Activated CD4-positive, alpha-beta T cell treated with anti-CD3 and anti-CD28 coated beads, Interleukin-2, amount 10 ng/mL, durations not matched to agents 24 days and 14 days (primary cell): ENCODE measurements at regions of chr4 and their contacts with region 1.

Region 1: GRCh38 chr4:38132107-38132673 is 172.0 kb downstream of the PTTG2 start:
- DNase-seq: peak; percentile 93
- H3K4me3 Mint-ChIP-seq: peak overlapping the region; percentile 76
- H3K27ac Mint-ChIP-seq: peak overlapping the region; percentile 87
- H3K4me1 Mint-ChIP-seq: peaks cover 52% of the 10 kb centered on the region
- H3K27me3 Mint-ChIP-seq: peaks cover 2% of the 10 kb centered on the region

Region 2: GRCh38 chr4:37826295-37827029 is 305.7 kb before region 1 on chr4 and contains the start of gene PGM2:
- intact Hi-C with region 1: loop called (anchors 1 kb)
- DNase-seq: peak; percentile 98
- H3K4me3 Mint-ChIP-seq: peak within 1 kb of the TSS; percentile 95
- H3K27ac Mint-ChIP-seq: peak within 1 kb of the TSS; percentile 91
- H3K4me1 Mint-ChIP-seq: peaks cover 32% of the 10 kb centered on the region
- H3K27me3 Mint-ChIP-seq: peaks cover 1% of the 10 kb centered on the region
- total RNA-seq, gene PGM2: 53.4 and 55.1 TPM in 2 replicates

Region 3: GRCh38 chr4:38023347-38024205 is 108.6 kb before region 1 on chr4:
- intact Hi-C with region 1: no loop called
- DNase-seq: no peak
- H3K4me3 Mint-ChIP-seq: no peak overlapping the region
- H3K27ac Mint-ChIP-seq: no peak overlapping the region
- H3K4me1 Mint-ChIP-seq: peaks cover 3% of the 10 kb centered on the region
- H3K27me3 Mint-ChIP-seq: no peaks in the 10 kb centered on the region

Region 4: DNA sequence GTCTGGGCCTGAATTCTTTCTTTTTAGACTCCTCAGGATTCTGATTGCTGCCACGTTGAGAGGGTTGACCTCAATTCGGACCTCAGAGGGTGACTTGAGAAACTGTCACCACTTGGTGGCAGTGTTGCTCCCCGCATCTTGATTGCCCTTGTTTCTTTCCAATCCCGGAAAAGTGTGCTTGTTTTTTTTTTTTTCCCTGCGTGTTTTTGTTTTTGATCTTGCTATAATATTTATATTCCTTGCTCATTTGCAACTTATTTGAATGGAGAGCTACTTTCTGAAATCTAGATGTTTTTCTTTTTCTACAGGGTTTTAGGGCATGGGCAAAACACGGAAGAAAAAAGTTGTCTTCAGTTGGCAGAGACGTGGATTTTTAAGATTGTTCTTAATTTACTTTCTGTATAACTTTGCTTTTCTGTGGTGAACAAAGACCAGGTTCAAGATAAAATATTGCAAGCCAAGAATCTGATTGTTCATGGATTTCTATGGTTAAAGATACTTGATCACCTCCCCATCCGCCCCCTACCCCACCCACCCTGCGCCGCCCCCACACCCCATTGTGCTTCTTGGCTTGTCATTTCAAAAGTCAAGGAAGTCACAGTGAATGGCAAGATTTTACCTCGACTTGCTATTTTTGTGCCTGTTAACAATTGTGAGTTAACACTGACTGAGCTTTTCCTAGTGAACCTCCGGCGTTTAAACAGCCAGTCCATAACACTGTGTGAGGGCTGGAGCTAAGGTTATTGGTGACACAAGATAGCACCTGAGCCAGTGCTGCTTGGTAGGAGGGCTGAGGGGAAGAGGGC is 69.9 kb before region 1 on chr4:
- intact Hi-C with region 1: loop called (anchors 1 kb)
- DNase-seq: peak; percentile 88
- H3K4me3 Mint-ChIP-seq: peak overlapping the region; percentile 88
- H3K27ac Mint-ChIP-seq: peak overlapping the region; percentile 69
- H3K4me1 Mint-ChIP-seq: peaks cover 12% of the 10 kb centered on the region
- H3K27me3 Mint-ChIP-seq: no peaks in the 10 kb centered on the region

Region 5: DNA sequence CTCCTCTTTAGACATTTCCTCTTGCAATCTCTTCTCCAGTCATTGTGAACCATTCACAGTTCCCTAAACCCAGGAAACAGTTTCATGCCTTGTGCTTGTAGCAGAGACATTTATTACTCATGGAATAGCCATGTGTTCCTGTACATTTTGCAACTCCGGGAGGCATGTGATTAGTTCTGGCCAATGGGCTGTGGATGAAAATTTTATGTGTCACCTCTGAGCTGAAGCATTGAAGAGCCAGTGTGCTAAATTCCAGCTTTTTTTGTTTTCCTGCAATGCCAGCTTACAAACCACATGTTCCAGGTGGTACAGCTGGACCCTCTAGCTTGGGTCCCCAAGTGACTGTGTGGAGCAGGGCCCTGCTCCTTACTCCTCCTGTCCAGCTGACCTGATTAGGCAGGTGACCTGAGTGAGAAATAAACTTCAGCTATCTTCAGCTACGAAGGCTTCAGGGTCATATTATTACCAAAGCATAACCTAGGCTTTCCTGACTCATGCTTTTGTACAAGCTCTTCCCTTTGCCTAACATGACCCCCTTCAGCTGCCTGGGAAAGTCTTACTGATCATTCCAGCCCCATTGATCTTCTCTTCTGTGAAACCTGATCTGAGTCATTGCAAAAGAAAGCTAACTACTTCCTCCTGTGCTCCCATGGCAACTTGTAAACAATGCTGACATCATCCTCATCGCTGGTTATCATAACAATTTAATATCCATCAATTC is 28.5 kb after region 1 on chr4:
- intact Hi-C with region 1: loop called (anchors 1 kb)
- DNase-seq: peak; percentile 88
- H3K4me3 Mint-ChIP-seq: peak overlapping the region; percentile 5
- H3K27ac Mint-ChIP-seq: peak overlapping the region; percentile 84
- H3K4me1 Mint-ChIP-seq: peaks cover 59% of the 10 kb centered on the region
- H3K27me3 Mint-ChIP-seq: peaks cover 7% of the 10 kb centered on the region

Region 6: GRCh38 chr4:38523524-38524448 is 391.6 kb after region 1 on chr4:
- intact Hi-C with region 1: loop called (anchors 2 kb)
- DNase-seq: peak; percentile 81
- H3K4me3 Mint-ChIP-seq: no peak overlapping the region
- H3K27ac Mint-ChIP-seq: peak overlapping the region; percentile 18
- H3K4me1 Mint-ChIP-seq: peaks cover 13% of the 10 kb centered on the region
- H3K27me3 Mint-ChIP-seq: peaks cover 27% of the 10 kb centered on the region

Region 7: DNA sequence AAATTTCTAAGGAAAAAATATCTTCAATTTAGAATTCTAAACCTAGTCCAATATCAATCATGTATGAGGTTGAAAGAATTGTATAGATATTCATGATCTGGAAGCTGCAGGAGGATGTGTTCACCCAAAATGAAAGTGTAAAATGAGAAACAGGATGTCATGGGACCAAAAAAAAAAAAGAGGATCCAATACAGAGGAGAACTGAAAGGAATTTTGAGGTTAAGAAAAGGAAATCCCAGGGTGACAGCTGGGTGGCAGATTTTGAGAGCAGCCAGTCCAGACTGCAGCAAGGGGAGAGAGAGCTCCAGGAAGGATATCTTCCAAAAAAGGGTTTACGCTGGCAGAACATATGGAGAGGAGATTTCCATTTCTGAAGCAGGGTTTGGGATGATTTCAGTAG is 611.7 kb after region 1 on chr4:
- intact Hi-C with region 1: no loop called
- DNase-seq: no peak
- H3K4me3 Mint-ChIP-seq: no peak overlapping the region
- H3K27ac Mint-ChIP-seq: no peak overlapping the region
- H3K4me1 Mint-ChIP-seq: peaks cover 6% of the 10 kb centered on the region
- H3K27me3 Mint-ChIP-seq: peaks cover 7% of the 10 kb centered on the region

Region 8: DNA sequence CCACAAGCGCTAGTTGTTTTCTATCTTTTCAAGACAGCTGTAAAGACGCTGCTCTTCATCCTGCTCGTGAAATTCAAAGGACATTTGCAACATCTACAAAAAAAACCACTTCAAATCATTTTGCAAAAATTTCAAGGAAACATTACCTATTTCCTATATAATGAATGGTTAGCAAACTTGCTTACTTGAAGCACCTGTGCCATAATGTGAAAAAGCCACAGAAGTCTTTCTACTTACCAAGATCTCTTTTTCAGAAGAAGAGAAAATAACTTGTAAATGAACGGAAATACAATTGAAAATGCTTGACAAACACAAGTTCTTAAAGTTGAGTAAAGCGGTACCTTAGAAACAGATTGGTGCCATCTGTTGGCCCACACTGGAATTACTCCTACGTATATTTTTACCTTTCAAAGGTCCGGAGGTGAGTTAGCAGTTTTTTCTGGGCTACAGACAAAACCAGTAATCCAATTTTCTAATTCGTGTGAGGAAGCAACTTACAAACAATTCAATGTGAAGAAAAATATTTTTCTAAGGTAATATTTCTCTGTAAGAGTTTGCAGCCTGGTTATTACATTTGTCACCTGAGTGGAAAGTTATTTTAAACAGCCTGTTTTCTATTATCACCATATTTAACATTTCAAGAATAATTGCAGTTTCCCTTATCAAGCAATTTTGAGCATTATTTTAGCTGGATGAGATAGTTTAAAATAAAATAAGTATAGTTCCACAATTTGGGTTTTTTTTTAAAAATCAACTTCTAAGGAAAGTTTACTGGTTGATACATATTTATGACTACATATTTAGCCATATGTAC is 724.5 kb after region 1 on chr4 and contains the start of gene TLR6:
- intact Hi-C with region 1: loop called (anchors 2 kb)
- DNase-seq: peak; percentile 93
- H3K4me3 Mint-ChIP-seq: peak within 1 kb of the TSS; percentile 80
- H3K27ac Mint-ChIP-seq: peak within 1 kb of the TSS; percentile 90
- H3K4me1 Mint-ChIP-seq: peaks cover 39% of the 10 kb centered on the region
- H3K27me3 Mint-ChIP-seq: no peaks in the 10 kb centered on the region
- total RNA-seq, gene TLR6: 0.88 and 1.1 TPM in 2 replicates